ENCODE measurements at regions of chr12 and their contacts with region 1.

Region 1: DNA sequence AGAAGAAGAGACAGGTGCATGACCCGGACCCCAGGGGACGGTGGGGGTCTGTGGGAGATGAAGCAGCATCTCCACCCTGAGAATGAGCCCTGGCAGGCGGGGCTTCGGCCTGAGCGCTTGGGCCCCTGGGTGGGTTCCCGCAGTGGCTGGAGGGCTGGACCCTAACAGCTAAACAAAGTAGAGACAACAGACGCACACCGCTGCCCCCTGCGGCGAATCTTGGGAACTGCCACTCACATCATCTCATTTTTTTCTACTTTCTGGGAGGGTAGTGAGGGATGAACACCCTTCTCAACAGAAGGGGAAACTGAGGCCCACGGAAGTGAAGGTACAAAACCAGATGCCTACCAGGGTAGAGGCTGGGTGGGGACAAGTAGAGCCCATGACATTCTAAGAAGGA is 104.7 kb downstream of the RFLNA start:
- DNase-seq: peak; percentile 33 to 69
- ATAC-seq: peak in 1 of 2 experiments; percentile 38; a peak in 3 of 6 replicates
- H3K4me3 ChIP-seq: no peak overlapping the region
- H3K27ac ChIP-seq: peak overlapping the region in 1 of 2 experiments; percentile 67; a peak in 3 of 6 replicates
- H3K4me1 ChIP-seq: peaks cover 60% of the 10 kb centered on the region
- CTCF ChIP-seq: peak; percentile 63
- EP300 ChIP-seq: no peak
- POLR2A ChIP-seq: no peak
- RAD21 ChIP-seq: peak; percentile 46 to 49; a peak in 3 of 5 replicates

Region 2: DNA sequence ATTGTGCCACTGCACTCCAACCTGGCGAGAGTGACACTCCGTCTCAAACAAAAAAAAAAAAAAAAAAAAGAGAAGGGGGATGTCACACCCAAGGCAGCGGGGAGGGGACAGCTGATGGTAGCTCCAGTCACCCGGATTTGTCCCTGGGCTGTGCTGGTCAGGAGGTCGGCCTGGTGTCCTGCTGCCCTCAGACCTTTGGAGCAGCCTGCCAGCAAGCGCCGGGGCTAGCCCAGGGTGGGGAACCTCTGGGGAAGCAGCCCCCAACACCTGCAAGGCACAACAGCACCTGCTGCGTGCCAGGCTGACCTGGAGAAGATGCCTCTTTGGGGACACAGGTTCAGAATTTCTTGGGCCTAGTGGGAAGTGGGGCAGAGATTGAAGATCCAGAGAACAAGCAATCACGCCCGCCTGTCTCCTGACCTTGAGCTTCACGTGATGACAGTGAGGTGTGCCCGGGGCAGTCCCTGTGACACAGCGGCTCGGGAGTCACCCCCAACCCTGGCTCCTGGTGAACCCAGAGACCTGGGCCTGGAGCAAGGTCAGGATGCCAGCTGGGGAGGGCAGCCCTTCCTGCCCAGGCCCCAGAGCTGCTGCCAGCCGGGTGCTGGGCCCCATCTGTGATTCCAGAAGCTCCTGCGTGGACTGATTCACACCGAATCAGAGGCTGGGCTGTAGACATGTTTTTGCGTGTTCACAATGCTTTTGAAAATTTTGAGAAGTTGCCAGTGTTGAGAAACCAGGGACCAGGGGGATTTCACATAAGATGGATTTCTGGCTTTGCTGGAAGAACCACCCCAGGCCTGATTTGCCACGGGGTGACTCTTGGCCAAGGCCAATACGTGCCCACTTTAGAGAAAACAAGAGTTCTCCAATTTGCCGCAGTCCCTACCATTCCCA is 38.3 kb before region 1 on chr12:
- CTCF ChIA-PET with region 1: interaction called, 62 read pairs
- POLR2A ChIA-PET with region 1: no interaction called
- DNase-seq: no peak
- ATAC-seq: no peak
- H3K4me3 ChIP-seq: no peak overlapping the region
- H3K27ac ChIP-seq: peak overlapping the region in 1 of 2 experiments; percentile 92; a peak in 3 of 6 replicates
- H3K4me1 ChIP-seq: peaks cover 40% of the 10 kb centered on the region
- CTCF ChIP-seq: no peak
- EP300 ChIP-seq: no peak
- POLR2A ChIP-seq: no peak
- RAD21 ChIP-seq: no peak

Region 3: DNA sequence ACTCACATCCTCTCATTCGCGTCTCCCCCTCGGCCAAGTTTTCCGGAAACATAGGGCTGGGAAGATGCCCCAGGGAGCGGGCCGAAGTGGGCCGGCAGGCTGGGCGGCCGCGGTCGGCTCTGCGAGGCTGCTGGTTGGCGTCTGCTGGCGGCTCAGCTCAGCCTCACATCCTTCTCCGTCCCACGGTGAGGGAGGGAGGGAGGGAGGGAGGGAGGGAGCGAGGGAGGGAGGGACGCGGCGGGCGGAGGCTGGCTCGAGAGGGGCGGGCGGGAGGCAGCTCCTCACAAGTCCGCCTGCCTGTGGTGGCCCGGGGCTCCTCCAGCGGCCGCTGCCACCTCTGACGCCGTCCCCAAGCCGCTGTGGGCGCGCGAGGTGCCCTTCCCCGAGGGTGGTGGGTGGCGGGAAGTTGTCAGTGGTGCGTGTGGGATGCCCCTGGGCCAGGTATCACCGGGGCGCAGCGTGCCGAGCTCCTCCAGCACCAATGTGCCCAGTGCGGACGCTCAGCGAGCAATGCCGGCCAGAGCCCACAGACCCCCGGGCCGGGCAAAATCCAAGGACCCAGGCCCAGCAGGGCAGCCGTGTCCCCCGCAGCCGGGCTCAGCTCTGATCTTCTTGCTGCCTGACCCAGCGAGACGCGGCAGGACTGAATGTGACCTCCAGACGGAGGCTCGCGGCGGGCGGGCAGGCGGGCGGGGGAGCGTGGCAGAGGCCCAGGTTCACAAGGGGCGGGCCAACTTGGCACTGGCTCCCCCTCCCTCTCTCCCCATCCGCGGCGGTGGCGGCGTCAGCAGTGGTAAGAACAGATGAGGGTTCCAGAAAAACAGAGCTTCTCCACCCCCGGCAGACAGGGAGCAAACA is 10.7 kb before region 1 on chr12:
- CTCF ChIA-PET with region 1: interaction called, 100 read pairs
- POLR2A ChIA-PET with region 1: interaction called, 19 read pairs
- DNase-seq: peak; percentile 74 to 94
- ATAC-seq: peak; percentile 30 to 56
- H3K4me3 ChIP-seq: peak overlapping the region; percentile 79
- H3K27ac ChIP-seq: peak overlapping the region; percentile 99 to 100
- H3K4me1 ChIP-seq: peaks cover 69% of the 10 kb centered on the region
- CTCF ChIP-seq: no peak
- EP300 ChIP-seq: peak; percentile 31 to 44; a peak in 2 of 5 replicates
- POLR2A ChIP-seq: peak; percentile 41
- RAD21 ChIP-seq: no peak; a peak in 1 of 5 replicates

Region 4: GRCh38 chr12:124411281-124411878 is 11.8 kb after region 1 on chr12:
- CTCF ChIA-PET with region 1: interaction called, 87 read pairs
- POLR2A ChIA-PET with region 1: no interaction called
- DNase-seq: peak in 1 of 2 experiments; percentile 57
- ATAC-seq: peak; percentile 80 to 83
- H3K4me3 ChIP-seq: no peak overlapping the region
- H3K27ac ChIP-seq: peak overlapping the region; percentile 62 to 94
- H3K4me1 ChIP-seq: peaks cover 27% of the 10 kb centered on the region
- CTCF ChIP-seq: no peak
- EP300 ChIP-seq: no peak
- POLR2A ChIP-seq: no peak
- RAD21 ChIP-seq: no peak

Region 5: DNA sequence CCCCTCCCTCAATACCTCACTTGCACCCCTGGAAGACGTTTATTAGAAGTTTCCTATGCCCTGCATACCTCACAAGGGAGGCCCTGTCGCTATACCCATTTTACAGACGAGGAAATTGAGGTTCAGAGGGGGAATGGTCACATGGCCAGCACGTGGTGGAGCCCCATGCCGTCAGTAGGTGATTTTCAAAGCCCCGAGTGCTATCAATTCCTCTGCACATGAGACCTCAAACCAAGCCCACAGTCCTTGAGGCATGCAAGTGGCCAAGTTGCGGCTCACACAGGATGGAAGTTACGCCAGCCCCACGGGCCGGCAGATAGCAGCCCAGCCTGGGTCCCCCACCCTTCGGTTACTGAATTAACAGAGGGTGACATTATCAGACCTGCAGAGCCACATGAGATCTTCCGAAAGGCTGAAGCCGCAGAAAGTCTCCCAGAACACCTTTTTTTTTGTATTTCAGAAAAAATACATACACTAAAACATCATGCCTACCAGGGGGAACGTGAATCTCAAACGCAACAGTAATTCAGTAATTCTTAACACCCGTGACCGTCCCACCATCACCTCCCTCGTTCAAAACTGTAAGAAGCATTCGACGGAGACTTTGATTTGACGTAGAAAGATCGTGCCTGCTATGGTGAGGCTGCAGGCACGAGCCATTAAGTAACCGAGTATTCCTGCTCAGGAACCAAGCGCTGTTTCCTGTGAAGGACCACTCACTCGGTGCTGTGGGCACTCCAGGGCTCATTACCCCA is 24.3 kb after region 1 on chr12:
- CTCF ChIA-PET with region 1: interaction called, 11 read pairs
- POLR2A ChIA-PET with region 1: no interaction called
- DNase-seq: no peak
- ATAC-seq: no peak
- H3K4me3 ChIP-seq: peak overlapping the region; percentile 35
- H3K27ac ChIP-seq: peak overlapping the region; percentile 91 to 99
- H3K4me1 ChIP-seq: peaks cover 34% of the 10 kb centered on the region
- CTCF ChIP-seq: no peak
- EP300 ChIP-seq: no peak
- POLR2A ChIP-seq: no peak
- RAD21 ChIP-seq: no peak